SK-N-SH (cell line): ENCODE measurements at regions of chr19 and their contacts with region 1.

Region 1: GRCh38 chr19:6218491-6219162 is 61.1 kb downstream of the MLLT1 start:
- DNase-seq: peak; percentile 97
- H3K4me3 ChIP-seq: peak overlapping the region in 1 of 2 experiments; percentile 9; a peak in 1 of 4 replicates
- H3K27ac ChIP-seq: peak overlapping the region in 1 of 2 experiments; percentile 51; a peak in 2 of 4 replicates
- H3K4me1 ChIP-seq: peaks cover 0 to 45% of the 10 kb centered on the region in 2 experiments; a peak in 1 of 4 replicates
- H3K27me3 ChIP-seq: no peaks in the 10 kb centered on the region
- CTCF ChIP-seq: peak; percentile 87
- EP300 ChIP-seq: no peak
- RAD21 ChIP-seq: peak; percentile 93

Region 2: DNA sequence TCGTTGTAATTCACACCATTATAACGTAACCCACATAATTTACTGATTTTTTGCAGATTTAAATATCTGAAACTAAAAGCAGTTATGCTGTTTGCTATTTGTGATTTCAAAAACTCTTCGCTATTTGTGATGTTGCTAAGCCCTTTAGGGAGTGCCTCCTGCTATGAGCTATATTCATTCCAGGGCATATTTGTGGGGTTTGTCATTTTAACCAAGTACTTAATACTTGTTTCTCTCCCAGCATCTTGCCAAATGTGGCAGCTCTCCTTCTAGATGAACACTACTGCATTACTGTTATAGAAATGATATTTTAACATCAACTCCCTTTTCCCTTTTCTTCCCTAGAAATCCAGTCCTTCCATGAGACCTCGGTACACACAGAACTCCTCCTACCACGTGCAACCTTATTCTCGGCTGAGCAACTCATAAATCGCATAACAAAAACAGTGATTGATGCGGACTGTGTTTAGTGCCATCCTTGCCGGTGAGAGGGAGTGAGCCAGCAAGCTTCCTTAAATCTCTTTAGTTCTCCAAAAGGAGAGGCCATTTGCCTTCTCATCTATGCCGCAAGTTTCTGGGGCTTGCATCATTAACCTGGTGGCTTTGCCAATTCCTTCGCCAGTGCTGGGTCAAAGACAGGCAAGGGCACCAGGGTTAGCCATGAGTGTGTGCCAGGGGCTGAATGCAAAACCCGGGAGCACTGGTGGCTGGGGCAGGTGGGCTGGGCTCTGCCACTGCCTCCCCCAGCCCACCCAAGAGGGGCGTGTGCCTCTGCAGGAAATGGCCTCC is 141.8 kb before region 1 on chr19:
- CTCF ChIA-PET with region 1: no interaction called
- POLR2A ChIA-PET with region 1: no interaction called
- DNase-seq: no peak
- H3K4me3 ChIP-seq: no peak overlapping the region
- H3K27ac ChIP-seq: peak overlapping the region; percentile 40 to 91; a peak in 3 of 4 replicates
- H3K4me1 ChIP-seq: peaks cover 0 to 20% of the 10 kb centered on the region in 2 experiments; a peak in 3 of 4 replicates
- H3K27me3 ChIP-seq: no peaks in the 10 kb centered on the region
- CTCF ChIP-seq: no peak
- EP300 ChIP-seq: peak in 1 of 2 experiments; percentile 58; a peak in 1 of 4 replicates
- RAD21 ChIP-seq: no peak

Region 3: DNA sequence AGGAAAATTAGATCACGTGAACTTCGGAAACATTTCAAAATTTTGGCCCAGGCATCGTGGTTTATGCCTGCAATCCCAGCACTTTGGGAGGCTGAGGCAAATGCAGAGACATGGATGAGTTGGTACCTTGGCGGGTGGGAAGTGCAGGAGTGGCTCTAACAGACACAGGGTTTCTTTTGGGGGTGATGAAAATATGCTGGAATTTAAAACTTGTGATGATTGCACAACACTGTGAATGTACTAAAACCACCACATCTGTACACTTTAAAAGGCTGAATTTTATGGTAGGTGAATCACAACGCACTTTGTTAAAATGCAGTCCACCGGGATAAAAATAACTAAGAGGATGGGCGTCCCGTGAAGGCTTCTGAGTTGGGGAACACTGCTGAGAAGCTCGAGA is 13.9 kb after region 1 on chr19:
- CTCF ChIA-PET with region 1: interaction called, 42 read pairs
- POLR2A ChIA-PET with region 1: interaction called, 4 read pairs
- DNase-seq: no peak
- H3K4me3 ChIP-seq: no peak overlapping the region
- H3K27ac ChIP-seq: no peak overlapping the region
- H3K4me1 ChIP-seq: peaks cover 5 to 41% of the 10 kb centered on the region in 2 experiments; a peak in 1 of 4 replicates
- H3K27me3 ChIP-seq: no peaks in the 10 kb centered on the region
- CTCF ChIP-seq: no peak
- EP300 ChIP-seq: no peak
- RAD21 ChIP-seq: no peak

Region 4: DNA sequence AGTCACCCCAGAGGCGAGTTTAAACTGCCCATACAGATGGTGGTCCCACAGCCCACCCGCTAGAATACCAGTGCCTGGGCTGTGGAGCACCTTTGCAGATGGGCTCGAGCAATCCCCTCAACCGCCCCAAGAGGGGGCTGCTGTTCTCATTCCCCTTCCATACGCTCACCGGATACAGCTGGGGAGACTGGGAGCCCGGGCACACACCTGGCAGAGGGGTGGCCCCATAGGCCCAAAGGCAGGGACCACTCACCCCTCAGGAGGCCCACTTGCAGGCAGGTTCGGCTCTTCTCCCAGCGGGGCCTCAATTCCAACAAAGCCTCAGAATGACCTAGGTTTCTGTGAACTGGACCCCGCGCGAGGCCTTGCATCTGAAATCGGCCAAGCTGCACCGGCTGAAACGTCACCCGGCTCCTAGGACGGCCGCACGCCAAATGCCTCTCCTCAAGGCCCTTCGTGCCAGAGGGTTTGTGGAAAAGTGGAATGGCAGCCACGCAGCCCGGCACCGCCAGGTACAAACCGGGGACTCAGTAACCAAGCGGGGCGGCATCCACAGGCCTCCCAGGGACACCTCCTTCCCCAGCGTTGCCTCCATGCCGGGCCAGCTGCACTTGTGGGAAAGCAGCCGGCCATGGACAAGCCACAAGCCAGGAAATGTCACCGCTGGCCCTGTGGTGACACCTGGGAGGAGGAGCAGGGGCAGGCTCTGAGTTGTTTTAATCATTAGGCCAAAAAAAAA is 42.5 kb after region 1 on chr19:
- CTCF ChIA-PET with region 1: interaction called, 13 read pairs
- POLR2A ChIA-PET with region 1: no interaction called
- DNase-seq: peak; percentile 84
- H3K4me3 ChIP-seq: no peak overlapping the region; a peak in 1 of 4 replicates
- H3K27ac ChIP-seq: no peak overlapping the region
- H3K4me1 ChIP-seq: peaks cover 0 to 7% of the 10 kb centered on the region in 2 experiments; a peak in 1 of 4 replicates
- H3K27me3 ChIP-seq: no peaks in the 10 kb centered on the region
- CTCF ChIP-seq: peak; percentile 63
- EP300 ChIP-seq: no peak
- RAD21 ChIP-seq: peak; percentile 58

Region 5: GRCh38 chr19:6273701-6274601 is 55.3 kb after region 1 on chr19:
- CTCF ChIA-PET with region 1: interaction called, 52 read pairs
- POLR2A ChIA-PET with region 1: no interaction called
- DNase-seq: peak; percentile 74
- H3K4me3 ChIP-seq: peak overlapping the region; percentile 15 to 54
- H3K27ac ChIP-seq: peak overlapping the region; percentile 82 to 99
- H3K4me1 ChIP-seq: peaks cover 44 to 93% of the 10 kb centered on the region in 2 experiments
- H3K27me3 ChIP-seq: no peaks in the 10 kb centered on the region
- CTCF ChIP-seq: no peak
- EP300 ChIP-seq: no peak
- RAD21 ChIP-seq: no peak

Region 6: DNA sequence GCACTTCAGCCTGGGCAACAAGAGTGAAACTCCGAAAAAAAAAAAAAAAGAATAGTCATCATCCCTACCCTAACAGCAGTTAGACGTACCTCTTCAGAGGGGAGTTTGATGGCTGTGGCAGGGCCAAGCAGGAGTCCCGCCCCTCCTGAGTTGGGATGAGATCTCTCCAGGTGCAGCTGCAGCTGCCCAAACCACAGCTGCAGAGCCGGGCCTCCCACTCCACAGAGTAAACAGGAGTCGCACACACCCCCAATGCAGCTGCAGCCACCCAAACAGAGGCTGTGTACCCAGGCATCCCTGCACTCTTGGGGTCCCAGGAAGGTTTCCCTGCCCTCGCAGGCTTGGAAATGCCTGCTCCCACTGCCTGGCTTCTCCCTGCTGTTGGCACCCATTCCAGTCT is 78.6 kb after region 1 on chr19:
- CTCF ChIA-PET with region 1: interaction called, 30 read pairs
- POLR2A ChIA-PET with region 1: no interaction called
- DNase-seq: no peak
- H3K4me3 ChIP-seq: no peak overlapping the region
- H3K27ac ChIP-seq: no peak overlapping the region
- H3K4me1 ChIP-seq: no peaks in the 10 kb centered on the region
- H3K27me3 ChIP-seq: peaks cover 11% of the 10 kb centered on the region; the same call in 1 of the 2 replicates
- CTCF ChIP-seq: no peak
- EP300 ChIP-seq: no peak
- RAD21 ChIP-seq: no peak